ENCODE measurements at regions of chr1 and their contacts with region 1.

Region 1: GRCh38 chr1:164644774-164645235 is 85.8 kb downstream of the PBX1 start:
- DNase-seq: no peak
- ATAC-seq: peak; percentile 17 to 32 (median 26)
- H3K4me3 ChIP-seq: peak overlapping the region; percentile 31
- H3K27ac ChIP-seq: peak overlapping the region; percentile 95
- H3K4me1 ChIP-seq: peaks cover 89% of the 10 kb centered on the region
- H3K27me3 ChIP-seq: no peaks in the 10 kb centered on the region
- CTCF ChIP-seq: no peak

Region 2: GRCh38 chr1:164689672-164690598 is 45.1 kb after region 1 on chr1:
- intact Hi-C with region 1: loop called in 1 of 2 experiments (anchors 5 kb)
- DNase-seq: no peak
- ATAC-seq: no peak
- H3K4me3 ChIP-seq: no peak overlapping the region
- H3K27ac ChIP-seq: no peak overlapping the region
- H3K4me1 ChIP-seq: peaks cover 8% of the 10 kb centered on the region
- H3K27me3 ChIP-seq: no peaks in the 10 kb centered on the region
- CTCF ChIP-seq: no peak

Region 3: DNA sequence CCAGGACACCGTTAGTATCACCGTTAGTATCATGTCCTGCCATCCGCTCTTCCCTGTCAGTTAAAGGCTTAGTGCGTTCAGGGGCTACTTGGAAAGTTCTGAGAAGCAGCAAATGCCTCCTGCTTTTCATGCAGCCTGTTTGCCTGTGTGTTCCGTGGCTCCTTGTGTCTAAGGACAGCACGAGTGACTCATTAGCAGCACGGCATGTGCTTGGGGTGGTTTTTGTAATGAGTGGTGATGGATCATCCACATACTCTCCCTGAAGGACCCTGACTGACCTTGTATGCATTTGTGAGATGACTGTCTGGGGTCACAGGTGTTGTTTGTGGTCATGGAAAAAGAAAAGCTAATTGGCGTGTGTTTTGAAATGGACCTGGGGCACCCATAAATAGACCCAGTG is 136.1 kb after region 1 on chr1:
- intact Hi-C with region 1: loop called in 1 of 2 experiments (anchors 5 kb)
- DNase-seq: peak; percentile 58 to 82
- ATAC-seq: peak; percentile 88 to 97 (median 96)
- H3K4me3 ChIP-seq: no peak overlapping the region
- H3K27ac ChIP-seq: peak overlapping the region; percentile 84
- H3K4me1 ChIP-seq: peaks cover 48% of the 10 kb centered on the region
- H3K27me3 ChIP-seq: no peaks in the 10 kb centered on the region
- CTCF ChIP-seq: no peak